Sciatic nerve (tissue), 2 donors: ENCODE measurements at regions of chr11 and their contacts with region 1.

Region 1: GRCh38 chr11:128669506-128670270 is 24.2 kb upstream of the FLI1 start:
- DNase-seq: no peak
- ATAC-seq: no peak

Region 2: GRCh38 chr11:130601141-130601540 is 1931.5 kb after region 1 on chr11:
- intact Hi-C with region 1: loop called (anchors 5 kb)
- DNase-seq: peak; percentile 77
- ATAC-seq: peak; percentile 96